ENCODE measurements at regions of chr7 and their contacts with region 1.

Region 1: GRCh38 chr7:38222481-38223096 is 44.5 kb downstream of the STARD3NL start:
- DNase-seq: no peak
- ATAC-seq: peak; percentile 61
- H3K4me3 Mint-ChIP-seq: no peak overlapping the region
- H3K27ac Mint-ChIP-seq: peak overlapping the region; percentile 37
- H3K4me1 Mint-ChIP-seq: peaks cover 36% of the 10 kb centered on the region
- H3K27me3 Mint-ChIP-seq: no peaks in the 10 kb centered on the region
- CTCF ChIP-seq: peak; percentile 90

Region 2: GRCh38 chr7:38360776-38361175 is 138.2 kb after region 1 on chr7:
- CTCF ChIA-PET with region 1: interaction called, 247 read pairs
- POLR2A ChIA-PET with region 1: no interaction called
- intact Hi-C with region 1: loop called (anchors 5 kb)
- DNase-seq: no peak
- ATAC-seq: no peak
- H3K4me3 Mint-ChIP-seq: peak overlapping the region; percentile 97
- H3K27ac Mint-ChIP-seq: peak overlapping the region; percentile 95
- H3K4me1 Mint-ChIP-seq: peaks cover 62% of the 10 kb centered on the region
- H3K27me3 Mint-ChIP-seq: no peaks in the 10 kb centered on the region
- CTCF ChIP-seq: no peak